Endothelial cell of umbilical vein (primary cell): ENCODE measurements at regions of chr22 and their contacts with region 1.

Region 1: GRCh38 chr22:30667494-30668385 is at the start of gene DUSP18:
- DNase-seq: peak; percentile 94
- H3K4me3 ChIP-seq: peak within 1 kb of the TSS; percentile 35 to 71 (median 66)
- H3K27ac ChIP-seq: peak within 1 kb of the TSS; percentile 25
- H3K4me1 ChIP-seq: peaks cover 18% of the 10 kb centered on the region
- H3K27me3 ChIP-seq: no peaks in the 10 kb centered on the region
- CTCF ChIP-seq: peak; percentile 19 to 41
- POLR2A ChIP-seq: peak; percentile 77
- total RNA-seq, gene DUSP18: 17.5 and 18.3 TPM in 2 replicates

Region 2: GRCh38 chr22:30224161-30224857 is 443.4 kb before region 1 on chr22:
- CTCF ChIA-PET with region 1: no interaction called
- POLR2A ChIA-PET with region 1: no interaction called
- dilution Hi-C with region 1: no loop called
- intact Hi-C with region 1: no loop called
- DNase-seq: no peak
- H3K4me3 ChIP-seq: no peak overlapping the region
- H3K27ac ChIP-seq: no peak overlapping the region
- H3K4me1 ChIP-seq: no peaks in the 10 kb centered on the region
- H3K27me3 ChIP-seq: peaks cover 8 to 26% of the 10 kb centered on the region in 2 experiments
- CTCF ChIP-seq: no peak
- POLR2A ChIP-seq: no peak

Region 3: GRCh38 chr22:30649430-30650007 is 18.2 kb before region 1 on chr22:
- CTCF ChIA-PET with region 1: interaction called, 9 read pairs
- POLR2A ChIA-PET with region 1: no interaction called
- dilution Hi-C with region 1: no loop called
- intact Hi-C with region 1: loop called (anchors 1 kb)
- DNase-seq: peak; percentile 66
- H3K4me3 ChIP-seq: no peak overlapping the region
- H3K27ac ChIP-seq: peak overlapping the region; percentile 51
- H3K4me1 ChIP-seq: peaks cover 11% of the 10 kb centered on the region
- H3K27me3 ChIP-seq: no peaks in the 10 kb centered on the region
- CTCF ChIP-seq: no peak
- POLR2A ChIP-seq: no peak

Region 4: GRCh38 chr22:30733181-30733631 is 65.5 kb after region 1 on chr22:
- CTCF ChIA-PET with region 1: no interaction called
- POLR2A ChIA-PET with region 1: no interaction called
- dilution Hi-C with region 1: no loop called
- intact Hi-C with region 1: loop called (anchors 1 kb)
- DNase-seq: peak; percentile 72
- H3K4me3 ChIP-seq: no peak overlapping the region
- H3K27ac ChIP-seq: peak overlapping the region; percentile 14
- H3K4me1 ChIP-seq: peaks cover 28% of the 10 kb centered on the region
- H3K27me3 ChIP-seq: no peaks in the 10 kb centered on the region
- CTCF ChIP-seq: no peak
- POLR2A ChIP-seq: no peak